ENCODE measurements at regions of chr19 and their contacts with region 1.

Region 1: DNA sequence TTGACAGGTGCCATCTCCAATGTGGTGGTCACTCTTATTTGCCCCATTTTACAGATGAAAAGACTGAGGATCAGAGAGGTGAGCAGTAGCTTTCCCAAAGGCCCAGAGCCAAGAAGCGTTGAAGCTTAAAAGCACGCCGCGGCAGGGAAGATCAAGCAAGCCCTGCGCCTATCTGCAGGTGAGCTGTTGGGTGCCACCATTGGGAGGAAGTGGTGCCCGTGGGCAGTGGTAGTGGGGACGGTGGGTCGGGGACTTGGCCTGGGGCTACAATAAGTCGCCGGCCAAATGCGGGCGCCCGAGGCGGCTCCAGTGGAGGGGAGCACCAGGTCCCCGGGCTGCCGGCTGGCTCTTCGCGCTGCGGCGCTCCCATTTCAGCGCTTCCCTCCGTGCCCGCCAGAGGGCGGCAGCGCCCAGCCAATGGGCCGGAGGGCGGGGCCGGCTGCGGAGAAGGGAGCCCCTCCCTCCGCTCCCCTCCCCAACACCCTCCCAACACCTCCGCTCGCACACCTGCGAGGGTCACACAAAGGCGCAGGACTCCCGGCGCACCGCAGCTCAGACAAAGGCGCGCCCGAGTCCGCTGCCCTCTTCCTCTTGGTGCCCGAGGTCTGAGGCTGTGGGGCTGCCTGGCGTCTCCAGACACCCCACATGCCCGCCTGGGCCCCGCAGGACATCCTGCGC is 744 bp upstream of the POU2F2 start:
- DNase-seq: peak in 3 of 4 donors; percentile 52 to 96 (median 68)
- ATAC-seq: peak; percentile 95
- H3K4me3 ChIP-seq: peak overlapping the region; percentile 1 to 49
- H3K27ac ChIP-seq: peak overlapping the region in 1 of 2 donors; percentile 34
- H3K4me1 ChIP-seq: peaks cover 8 to 43% of the 10 kb centered on the region in 2 donors
- H3K27me3 ChIP-seq: peaks cover 11 to 77% of the 10 kb centered on the region in 2 donors
- CTCF ChIP-seq: peak; percentile 97 to 99

Region 2: GRCh38 chr19:42184401-42184861 is 51.4 kb after region 1 on chr19:
- intact Hi-C with region 1: loop called in 1 of 2 experiments (anchors 10 kb)
- DNase-seq: peak; percentile 37 to 86 (median 66)
- ATAC-seq: peak; percentile 94
- H3K4me3 ChIP-seq: no peak overlapping the region
- H3K27ac ChIP-seq: peak overlapping the region in 1 of 2 donors; percentile 56
- H3K4me1 ChIP-seq: peaks cover 6 to 43% of the 10 kb centered on the region in 2 donors
- H3K27me3 ChIP-seq: peaks cover 13 to 29% of the 10 kb centered on the region in 2 donors
- CTCF ChIP-seq: peak; percentile 82 to 92

Region 3: GRCh38 chr19:42313096-42313839 is 180.3 kb after region 1 on chr19 and contains the start of gene TMEM145:
- intact Hi-C with region 1: loop called in 1 of 2 experiments (anchors 10 kb)
- DNase-seq: peak in 1 of 4 donors; percentile 58
- ATAC-seq: peak; percentile 86
- H3K4me3 ChIP-seq: peak within 1 kb of the TSS in 1 of 2 donors; percentile 35
- H3K27ac ChIP-seq: no peak within 1 kb of the TSS
- H3K4me1 ChIP-seq: peaks cover 9 to 21% of the 10 kb centered on the region in 2 donors
- H3K27me3 ChIP-seq: peaks cover 9 to 48% of the 10 kb centered on the region in 2 donors
- CTCF ChIP-seq: no peak
- polyA plus RNA-seq, gene TMEM145: 0.50 to 1.6 (median 1.1) TPM

Measured in left lung (tissue), 14 donors.